HAP-1 (cell line): ENCODE measurements at regions of chr2 and their contacts with region 1.

Region 1: GRCh38 chr2:197356136-197356535 is 45.6 kb upstream of the ANKRD44 start:
- DNase-seq: peak in 1 of 2 experiments; percentile 18
- H3K4me3 ChIP-seq: no peak overlapping the region
- H3K4me1 ChIP-seq: no peaks in the 10 kb centered on the region
- H3K27me3 ChIP-seq: no peaks in the 10 kb centered on the region

Region 2: DNA sequence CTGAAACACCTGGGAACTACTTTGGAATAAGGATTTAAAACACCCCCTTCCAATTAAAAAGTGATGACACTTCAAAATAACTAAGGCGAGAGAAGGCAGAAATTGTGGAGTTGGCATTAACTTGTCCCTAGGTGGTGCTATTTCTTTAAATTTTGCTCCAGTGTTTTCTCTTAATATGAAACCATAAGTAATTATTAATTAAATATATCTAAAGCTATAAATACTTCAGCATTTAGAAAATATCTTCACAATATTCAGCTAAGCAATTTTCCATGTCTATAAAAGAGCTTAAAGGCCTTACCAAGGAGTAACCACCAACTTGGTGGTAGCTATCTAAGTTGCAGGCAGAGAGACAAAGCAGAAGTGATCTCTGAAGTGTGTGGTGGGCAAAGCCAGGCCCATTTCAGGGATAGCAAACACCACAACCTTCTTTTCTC is 242.8 kb before region 1 on chr2:
- in situ Hi-C with region 1: loop called (anchors 10 kb)
- DNase-seq: no peak
- H3K4me3 ChIP-seq: no peak overlapping the region
- H3K4me1 ChIP-seq: no peaks in the 10 kb centered on the region
- H3K27me3 ChIP-seq: no peaks in the 10 kb centered on the region